Transverse colon (tissue), 4 donors: ENCODE measurements at regions of chr5 and their contacts with region 1.

Region 1: DNA sequence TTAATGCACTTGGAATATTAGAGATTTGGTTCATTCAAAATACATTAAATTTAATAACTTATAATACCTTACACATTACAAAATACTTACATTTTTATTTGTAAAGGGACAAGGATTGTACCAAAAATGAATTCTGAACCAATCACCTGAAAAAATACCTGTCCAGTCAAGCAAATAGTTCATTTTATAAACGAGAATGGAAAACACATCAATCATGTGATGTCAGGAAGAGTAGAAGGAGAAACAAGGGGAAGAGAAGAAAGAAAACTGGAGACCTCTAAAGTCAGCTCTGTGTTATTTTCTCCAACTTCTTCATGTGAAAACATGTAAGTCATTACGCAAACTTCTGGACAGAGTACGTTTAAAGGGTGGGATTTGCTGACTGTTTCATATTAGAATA is 989.0 kb upstream of the NUDT12 start:
- DNase-seq: no peak
- H3K4me3 ChIP-seq: no peak overlapping the region
- H3K27ac ChIP-seq: no peak overlapping the region
- H3K4me1 ChIP-seq: no peaks in the 10 kb centered on the region
- H3K27me3 ChIP-seq: no peaks in the 10 kb centered on the region
- CTCF ChIP-seq: no peak
- EP300 ChIP-seq: no peak
- POLR2A ChIP-seq: no peak

Region 2: GRCh38 chr5:104526866-104527265 is 24.8 kb before region 1 on chr5:
- in situ Hi-C with region 1: no loop called
- intact Hi-C with region 1: no loop called
- DNase-seq: no peak
- H3K4me3 ChIP-seq: no peak overlapping the region
- H3K27ac ChIP-seq: no peak overlapping the region
- H3K4me1 ChIP-seq: no peaks in the 10 kb centered on the region
- H3K27me3 ChIP-seq: no peaks in the 10 kb centered on the region
- CTCF ChIP-seq: no peak
- EP300 ChIP-seq: no peak
- POLR2A ChIP-seq: no peak

Region 3: GRCh38 chr5:104598285-104598684 is 46.7 kb after region 1 on chr5:
- in situ Hi-C with region 1: no loop called
- intact Hi-C with region 1: no loop called
- DNase-seq: no peak
- H3K4me3 ChIP-seq: no peak overlapping the region
- H3K27ac ChIP-seq: no peak overlapping the region
- H3K4me1 ChIP-seq: no peaks in the 10 kb centered on the region
- H3K27me3 ChIP-seq: no peaks in the 10 kb centered on the region
- CTCF ChIP-seq: no peak
- EP300 ChIP-seq: no peak
- POLR2A ChIP-seq: no peak

Region 4: GRCh38 chr5:104734046-104734445 is 182.4 kb after region 1 on chr5:
- in situ Hi-C with region 1: no loop called
- intact Hi-C with region 1: loop called (anchors 10 kb)
- DNase-seq: no peak
- H3K4me3 ChIP-seq: no peak overlapping the region
- H3K27ac ChIP-seq: peak overlapping the region in 1 of 4 donors; percentile 28
- H3K4me1 ChIP-seq: no peaks in the 10 kb centered on the region
- H3K27me3 ChIP-seq: no peaks in the 10 kb centered on the region
- CTCF ChIP-seq: no peak
- EP300 ChIP-seq: no peak
- POLR2A ChIP-seq: no peak